Activated T-helper 2 cell treated with anti-CD3 and anti-CD28 coated beads, Interferon-gamma antibody, Interleukin-2, Interleukin-4, amounts not matched to agents 10 μg/mL and 5 μg/mL and 100 μg/mL, durations not matched to agents 14 hours and 24 hours and 36 hours (primary cell): ENCODE measurements at regions of chr6 and their contacts with region 1.

Region 1: GRCh38 chr6:107657755-107658461 is 166.2 kb downstream of the SCML4 start:
- DNase-seq: peak; percentile 65
- H3K4me3 Mint-ChIP-seq: peak overlapping the region; percentile 45
- H3K27ac Mint-ChIP-seq: no peak overlapping the region
- H3K4me1 Mint-ChIP-seq: peaks cover 45% of the 10 kb centered on the region
- H3K27me3 Mint-ChIP-seq: peaks cover 16% of the 10 kb centered on the region

Region 2: DNA sequence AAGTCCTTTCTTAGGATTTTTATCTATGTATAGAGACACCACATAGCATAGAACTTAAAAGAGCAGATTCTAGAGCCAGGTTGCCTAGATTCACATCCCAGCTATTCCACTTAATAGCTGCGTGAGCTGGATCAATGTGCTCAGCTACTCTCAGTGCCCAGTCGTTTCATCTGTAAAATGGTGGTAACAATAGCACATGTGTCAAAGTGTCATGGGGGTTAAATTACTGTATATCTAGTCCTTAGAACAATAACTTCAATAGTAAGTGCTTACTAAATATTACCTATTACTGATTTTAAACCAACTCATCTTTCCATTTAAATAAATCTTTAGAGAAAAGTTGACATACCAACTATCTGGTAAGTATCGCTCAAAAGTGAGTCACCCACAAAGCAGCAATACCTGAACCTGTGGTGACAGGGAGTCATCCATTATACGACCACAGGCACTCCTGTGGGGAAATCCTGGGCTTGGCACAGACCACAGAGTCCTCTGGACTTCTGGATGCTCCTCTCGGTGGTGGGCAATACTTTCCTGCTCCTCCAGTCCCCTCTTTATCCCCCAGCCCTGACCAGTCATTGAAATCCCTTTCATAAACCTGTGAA is 353.4 kb before region 1 on chr6:
- intact Hi-C with region 1: no loop called
- DNase-seq: no peak
- H3K4me3 Mint-ChIP-seq: no peak overlapping the region
- H3K27ac Mint-ChIP-seq: no peak overlapping the region
- H3K4me1 Mint-ChIP-seq: peaks cover 16% of the 10 kb centered on the region
- H3K27me3 Mint-ChIP-seq: no peaks in the 10 kb centered on the region

Region 3: DNA sequence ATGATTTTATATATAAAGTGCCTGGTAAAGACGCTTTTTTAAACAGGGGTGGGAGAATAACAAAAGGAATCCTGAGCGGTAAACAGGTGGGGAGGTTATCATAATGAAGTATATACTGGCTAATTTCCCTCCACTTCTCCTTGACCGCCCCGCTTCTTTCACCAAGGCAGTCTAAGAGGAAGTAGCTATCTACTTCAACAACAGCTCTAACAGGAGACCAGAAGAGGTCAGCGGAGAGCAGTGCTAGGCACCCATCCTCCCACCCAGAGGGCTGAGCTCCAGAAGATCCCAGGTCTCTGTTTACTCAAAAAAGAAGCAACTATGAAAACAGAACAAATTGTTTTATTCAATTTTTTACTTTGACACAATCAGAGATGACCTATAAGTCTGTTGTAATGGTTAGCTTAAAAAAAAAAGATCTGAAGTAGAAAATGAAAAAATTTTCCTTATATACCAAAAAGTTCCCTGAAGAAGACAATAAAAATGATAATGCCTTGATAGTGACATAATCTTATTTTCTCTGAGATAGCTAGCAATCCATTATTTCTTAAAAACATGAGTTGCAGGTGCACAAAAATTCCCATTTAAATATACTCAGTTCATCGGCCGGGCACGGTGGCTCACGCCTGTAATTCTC is 339.7 kb before region 1 on chr6:
- intact Hi-C with region 1: loop called (anchors 10 kb)
- DNase-seq: no peak
- H3K4me3 Mint-ChIP-seq: no peak overlapping the region
- H3K27ac Mint-ChIP-seq: no peak overlapping the region
- H3K4me1 Mint-ChIP-seq: peaks cover 10% of the 10 kb centered on the region
- H3K27me3 Mint-ChIP-seq: no peaks in the 10 kb centered on the region

Region 4: DNA sequence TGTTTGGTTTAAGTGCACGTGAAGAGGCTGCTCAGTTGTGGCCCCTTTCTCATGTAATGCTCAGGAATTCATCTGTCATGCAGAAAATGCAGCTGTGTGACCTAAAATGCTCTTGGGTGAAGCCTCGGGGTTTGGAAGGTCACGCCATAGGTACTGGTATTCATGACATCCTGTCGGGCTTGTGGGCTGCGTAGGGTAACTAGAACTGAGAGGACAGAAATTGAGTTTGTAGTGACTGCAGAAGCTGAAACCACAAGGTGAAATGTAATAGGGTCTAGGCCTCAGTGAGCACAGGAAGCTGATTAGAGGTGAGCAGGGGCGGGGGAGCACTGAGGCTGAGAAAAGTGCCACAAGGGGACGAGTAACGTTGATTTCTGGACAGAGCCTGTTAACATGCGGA is 39.2 kb before region 1 on chr6:
- intact Hi-C with region 1: loop called (anchors 1 kb)
- DNase-seq: peak; percentile 57
- H3K4me3 Mint-ChIP-seq: no peak overlapping the region
- H3K27ac Mint-ChIP-seq: peak overlapping the region; percentile 68
- H3K4me1 Mint-ChIP-seq: peaks cover 25% of the 10 kb centered on the region
- H3K27me3 Mint-ChIP-seq: peaks cover 6% of the 10 kb centered on the region